ENCODE measurements at regions of chr7 and their contacts with region 1.

Region 1: GRCh38 chr7:79806161-79806734 is 328.4 kb upstream of the GNAI1 start:
- DNase-seq: peak; percentile 19
- ATAC-seq: peak; percentile 78
- H3K4me3 ChIP-seq: no peak overlapping the region
- H3K27ac ChIP-seq: no peak overlapping the region
- H3K4me1 ChIP-seq: no peaks in the 10 kb centered on the region
- H3K27me3 ChIP-seq: no peaks in the 10 kb centered on the region
- CTCF ChIP-seq: peak; percentile 29 to 50 (median 31); a peak in 4 of 6 replicates
- POLR2A ChIP-seq: no peak
- RAD21 ChIP-seq: peak; percentile 64

Region 2: GRCh38 chr7:80018941-80019752 is 212.9 kb after region 1 on chr7:
- CTCF ChIA-PET with region 1: no interaction called
- POLR2A ChIA-PET with region 1: no interaction called
- RAD21 ChIA-PET with region 1: no interaction called
- intact Hi-C with region 1: loop called (anchors 1 kb)
- DNase-seq: peak; percentile 54
- ATAC-seq: peak; percentile 97
- H3K4me3 ChIP-seq: no peak overlapping the region
- H3K27ac ChIP-seq: no peak overlapping the region
- H3K4me1 ChIP-seq: peaks cover 0 to 6% of the 10 kb centered on the region in 2 experiments; a peak in 1 of 4 replicates
- H3K27me3 ChIP-seq: no peaks in the 10 kb centered on the region
- CTCF ChIP-seq: peak; percentile 67 to 97 (median 79); a peak in 5 of 6 replicates
- POLR2A ChIP-seq: no peak
- RAD21 ChIP-seq: peak; percentile 73

Region 3: GRCh38 chr7:80453699-80454340 is 647.6 kb after region 1 on chr7:
- CTCF ChIA-PET with region 1: no interaction called
- POLR2A ChIA-PET with region 1: no interaction called
- RAD21 ChIA-PET with region 1: no interaction called
- intact Hi-C with region 1: loop called (anchors 10 kb)
- DNase-seq: peak; percentile 19
- ATAC-seq: peak; percentile 42; the same call in 1 of the 2 replicates
- H3K4me3 ChIP-seq: no peak overlapping the region
- H3K27ac ChIP-seq: no peak overlapping the region
- H3K4me1 ChIP-seq: peaks cover 3 to 14% of the 10 kb centered on the region in 2 experiments; a peak in 2 of 4 replicates
- H3K27me3 ChIP-seq: no peaks in the 10 kb centered on the region
- CTCF ChIP-seq: peak; percentile 30 to 69 (median 56); a peak in 4 of 6 replicates
- POLR2A ChIP-seq: no peak
- RAD21 ChIP-seq: peak; percentile 85